ENCODE measurements at regions of chr7 and their contacts with region 1.

Region 1: DNA sequence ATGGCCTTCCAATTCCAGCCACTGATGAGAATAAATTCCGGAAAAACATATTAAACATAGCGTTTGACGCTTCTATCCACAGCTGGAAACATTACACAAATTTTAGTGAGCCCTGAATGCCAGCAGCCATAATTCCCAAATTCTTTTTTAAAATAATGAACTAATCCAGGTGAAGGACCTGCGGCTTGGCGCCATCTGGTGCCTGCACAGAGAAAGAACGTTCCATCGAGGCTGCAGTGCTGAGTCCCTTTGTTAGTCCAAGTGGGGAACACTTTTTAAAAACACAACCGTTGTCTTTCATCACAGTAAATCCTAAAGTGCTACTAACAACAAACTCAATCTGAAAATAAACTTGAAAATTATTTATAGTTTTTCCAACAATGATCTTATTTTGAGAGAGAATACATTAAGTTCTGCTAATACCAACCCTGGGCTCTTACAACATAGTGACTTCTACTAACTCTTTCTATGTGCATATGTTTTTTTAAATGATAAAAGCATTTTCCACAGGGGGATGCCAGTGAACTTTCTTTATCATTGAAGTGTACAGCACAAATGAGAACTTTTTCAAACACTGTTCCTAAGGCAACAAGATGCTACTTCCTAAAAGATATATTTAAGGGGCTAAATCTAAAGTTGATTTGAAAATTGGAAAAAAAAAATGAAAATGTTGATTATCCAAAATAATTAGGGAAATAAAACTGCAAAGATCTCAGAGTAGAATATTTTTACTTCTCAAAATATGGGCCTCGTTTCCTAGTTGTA is 166.9 kb upstream of the RNF32 start:
- DNase-seq: peak; percentile 23
- H3K4me3 ChIP-seq: no peak overlapping the region
- H3K27ac ChIP-seq: no peak overlapping the region
- H3K4me1 ChIP-seq: no peaks in the 10 kb centered on the region
- H3K27me3 ChIP-seq: peaks cover 63% of the 10 kb centered on the region
- CTCF ChIP-seq: peak; percentile 71

Region 2: DNA sequence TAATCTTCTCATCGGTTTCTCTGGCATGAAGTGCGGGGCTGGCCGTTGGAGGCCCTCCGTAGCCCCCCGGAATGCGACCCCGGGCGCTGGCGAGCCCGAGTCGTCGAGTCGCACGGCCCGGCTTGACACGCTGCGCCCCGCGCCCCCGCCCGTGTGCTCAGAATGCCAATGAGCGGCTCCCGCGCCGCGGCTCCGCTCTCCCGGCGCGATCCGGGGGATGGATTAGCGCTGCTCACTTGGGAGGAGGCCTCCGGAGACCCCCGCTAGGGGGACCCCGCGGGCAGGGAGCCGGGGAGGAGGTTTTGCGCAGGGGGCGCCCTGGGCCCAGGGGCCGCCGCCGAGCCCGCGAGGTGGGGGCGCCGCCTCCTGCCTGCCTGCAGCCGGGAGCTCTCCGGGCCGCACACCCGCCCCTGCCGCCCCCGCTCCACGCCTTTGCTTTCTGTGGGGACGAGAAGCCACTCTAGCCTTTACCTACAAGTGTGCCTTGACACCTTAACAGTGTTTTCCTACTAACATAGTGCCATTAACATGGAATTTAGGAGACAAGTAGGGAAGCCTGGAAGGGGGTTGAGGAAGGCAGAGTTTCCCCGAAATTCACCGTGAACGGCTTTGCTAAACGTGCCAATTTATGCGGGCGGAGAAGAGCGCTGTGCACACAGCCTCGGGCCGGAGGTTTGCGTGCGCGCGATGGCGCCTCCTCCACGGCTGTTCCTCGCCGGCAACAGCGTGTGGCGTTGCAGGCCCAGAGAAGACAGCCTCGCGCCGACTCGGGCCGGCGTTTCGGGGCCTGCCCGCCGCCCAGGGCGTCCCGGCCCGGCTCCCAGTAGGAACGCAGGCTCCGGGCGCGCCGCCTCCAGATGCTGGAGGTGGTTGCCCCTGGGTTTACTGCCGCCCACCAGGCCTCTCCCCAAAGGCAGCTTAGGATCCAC is 668.5 kb before region 1 on chr7:
- intact Hi-C with region 1: loop called (anchors 10 kb)
- DNase-seq: peak; percentile 44
- H3K4me3 ChIP-seq: peak overlapping the region; percentile 63
- H3K27ac ChIP-seq: no peak overlapping the region
- H3K4me1 ChIP-seq: peaks cover 63% of the 10 kb centered on the region
- H3K27me3 ChIP-seq: peaks cover 100% of the 10 kb centered on the region
- CTCF ChIP-seq: peak; percentile 61

Region 3: GRCh38 chr7:156192921-156193320 is 280.7 kb before region 1 on chr7:
- intact Hi-C with region 1: no loop called
- DNase-seq: no peak
- H3K4me3 ChIP-seq: no peak overlapping the region
- H3K27ac ChIP-seq: no peak overlapping the region
- H3K4me1 ChIP-seq: no peaks in the 10 kb centered on the region
- H3K27me3 ChIP-seq: peaks cover 67% of the 10 kb centered on the region
- CTCF ChIP-seq: no peak

Region 4: GRCh38 chr7:157238087-157238486 is 764.4 kb after region 1 on chr7:
- intact Hi-C with region 1: no loop called
- DNase-seq: no peak
- H3K4me3 ChIP-seq: no peak overlapping the region
- H3K27ac ChIP-seq: no peak overlapping the region
- H3K4me1 ChIP-seq: peaks cover 1% of the 10 kb centered on the region
- H3K27me3 ChIP-seq: no peaks in the 10 kb centered on the region
- CTCF ChIP-seq: no peak